Activated CD4-positive, alpha-beta memory T cell treated with anti-CD3 and anti-CD28 coated beads for 36 hours (primary cell): ENCODE measurements at regions of chr12 and their contacts with region 1.

Region 1: DNA sequence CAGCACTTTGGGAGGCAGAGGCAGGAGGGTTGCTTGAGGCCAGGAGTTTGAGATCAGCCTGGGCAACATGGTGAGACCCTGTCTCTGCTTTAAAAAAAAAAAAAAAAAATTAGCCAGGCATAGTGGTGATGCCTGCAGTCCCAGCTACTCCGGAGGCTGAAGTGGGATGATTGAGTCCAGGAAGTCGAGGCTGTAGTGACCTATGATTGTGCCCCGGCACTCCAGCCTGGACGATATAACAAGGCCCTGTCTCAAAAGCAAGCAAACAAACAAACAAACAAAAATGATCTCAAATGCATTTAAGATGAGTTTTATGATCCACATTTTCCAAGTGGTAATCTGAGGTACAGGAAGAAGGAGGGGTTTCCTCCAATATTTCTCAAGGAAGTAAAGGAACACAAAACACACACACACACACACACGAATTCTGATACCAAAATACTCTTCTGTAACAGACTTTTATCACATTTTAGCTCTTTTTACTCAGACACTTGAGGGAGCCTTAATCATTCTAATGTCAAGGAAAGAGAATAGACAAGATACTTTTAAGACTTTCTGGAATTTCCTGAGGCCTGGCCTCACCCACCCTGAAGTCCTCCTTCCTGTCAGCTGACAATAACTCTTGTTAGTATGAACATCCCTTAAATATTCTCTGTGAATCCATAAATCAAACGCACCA is 44.4 kb upstream of the CERS5 start:
- DNase-seq: no peak
- H3K4me3 Mint-ChIP-seq: peak overlapping the region; percentile 47
- H3K27ac Mint-ChIP-seq: peak overlapping the region; percentile 91
- H3K4me1 Mint-ChIP-seq: peaks cover 38% of the 10 kb centered on the region
- H3K27me3 Mint-ChIP-seq: no peaks in the 10 kb centered on the region

Region 2: DNA sequence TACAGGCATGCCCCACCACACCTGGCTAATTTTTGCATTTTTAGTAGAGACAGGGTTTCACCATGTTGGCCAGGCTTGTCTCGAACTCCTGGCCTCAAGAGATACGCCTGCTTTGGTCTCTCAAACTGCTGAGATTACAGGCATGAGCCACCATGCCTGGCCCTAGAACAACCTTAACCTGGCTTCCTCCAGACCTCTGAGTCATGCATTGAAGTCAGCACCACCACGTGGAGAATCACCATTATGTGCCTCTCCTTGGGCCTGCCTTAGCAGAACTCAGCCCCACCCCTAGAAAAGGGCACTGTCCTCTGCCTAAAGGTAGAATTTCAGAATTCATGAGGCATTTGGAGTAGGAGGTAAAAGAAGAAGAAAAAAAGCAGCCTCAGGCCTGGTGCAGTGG is 22.8 kb after region 1 on chr12:
- CTCF ChIA-PET with region 1: no interaction called
- POLR2A ChIA-PET with region 1: no interaction called
- intact Hi-C with region 1: no loop called
- DNase-seq: peak; percentile 56
- H3K4me3 Mint-ChIP-seq: no peak overlapping the region
- H3K27ac Mint-ChIP-seq: no peak overlapping the region
- H3K4me1 Mint-ChIP-seq: peaks cover 6% of the 10 kb centered on the region
- H3K27me3 Mint-ChIP-seq: no peaks in the 10 kb centered on the region

Region 3: GRCh38 chr12:50246873-50247612 is 35.5 kb after region 1 on chr12:
- CTCF ChIA-PET with region 1: interaction called, 3 read pairs
- POLR2A ChIA-PET with region 1: interaction called, 3 read pairs
- intact Hi-C with region 1: loop called (anchors 5 kb)
- DNase-seq: peak; percentile 73
- H3K4me3 Mint-ChIP-seq: peak overlapping the region; percentile 78
- H3K27ac Mint-ChIP-seq: peak overlapping the region; percentile 91
- H3K4me1 Mint-ChIP-seq: peaks cover 69% of the 10 kb centered on the region
- H3K27me3 Mint-ChIP-seq: no peaks in the 10 kb centered on the region

Region 4: GRCh38 chr12:50314629-50315312 is 103.2 kb after region 1 on chr12:
- CTCF ChIA-PET with region 1: interaction called, 11 read pairs
- POLR2A ChIA-PET with region 1: no interaction called
- intact Hi-C with region 1: no loop called
- DNase-seq: no peak
- H3K4me3 Mint-ChIP-seq: no peak overlapping the region
- H3K27ac Mint-ChIP-seq: no peak overlapping the region
- H3K4me1 Mint-ChIP-seq: no peaks in the 10 kb centered on the region
- H3K27me3 Mint-ChIP-seq: no peaks in the 10 kb centered on the region